H1 (cell line): ENCODE measurements at regions of chr1 and their contacts with region 1.

Region 1: GRCh38 chr1:67540733-67541125 is 110.5 kb upstream of the SERBP1 start:
- DNase-seq: no peak
- H3K4me3 ChIP-seq: no peak overlapping the region
- H3K27ac ChIP-seq: no peak overlapping the region
- H3K4me1 ChIP-seq: no peaks in the 10 kb centered on the region
- H3K27me3 ChIP-seq: no peaks in the 10 kb centered on the region
- CTCF ChIP-seq: no peak
- EP300 ChIP-seq: no peak
- POLR2A ChIP-seq: no peak
- RAD21 ChIP-seq: no peak

Region 2: DNA sequence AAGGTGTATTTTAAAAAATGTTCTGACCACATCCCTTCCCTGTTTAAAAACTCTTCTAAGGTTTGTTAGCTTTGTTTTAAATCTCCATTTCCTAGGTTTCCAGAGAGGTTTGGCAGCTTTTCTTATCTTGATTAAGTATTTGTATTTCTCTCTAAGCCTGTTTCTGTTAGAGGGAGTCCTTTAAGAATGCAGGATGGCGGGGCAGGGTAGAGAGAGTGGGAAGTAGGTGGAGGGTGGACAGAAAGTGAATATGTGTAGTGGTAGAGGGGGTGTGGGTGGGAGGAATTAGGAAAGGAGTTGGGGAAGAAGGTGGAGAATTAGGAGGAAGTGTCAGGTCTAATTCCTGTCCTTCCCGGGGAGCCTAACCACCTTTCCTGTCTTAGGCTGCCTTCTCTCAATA is 89.4 kb before region 1 on chr1:
- CTCF ChIA-PET with region 1: no interaction called
- POLR2A ChIA-PET with region 1: no interaction called
- DNase-seq: no peak
- H3K4me3 ChIP-seq: no peak overlapping the region
- H3K27ac ChIP-seq: no peak overlapping the region
- H3K4me1 ChIP-seq: peaks cover 0 to 2% (median under 1%) of the 10 kb centered on the region in 4 experiments; a peak in 2 of 7 replicates
- H3K27me3 ChIP-seq: no peaks in the 10 kb centered on the region
- CTCF ChIP-seq: no peak
- EP300 ChIP-seq: no peak
- POLR2A ChIP-seq: no peak
- RAD21 ChIP-seq: no peak

Region 3: DNA sequence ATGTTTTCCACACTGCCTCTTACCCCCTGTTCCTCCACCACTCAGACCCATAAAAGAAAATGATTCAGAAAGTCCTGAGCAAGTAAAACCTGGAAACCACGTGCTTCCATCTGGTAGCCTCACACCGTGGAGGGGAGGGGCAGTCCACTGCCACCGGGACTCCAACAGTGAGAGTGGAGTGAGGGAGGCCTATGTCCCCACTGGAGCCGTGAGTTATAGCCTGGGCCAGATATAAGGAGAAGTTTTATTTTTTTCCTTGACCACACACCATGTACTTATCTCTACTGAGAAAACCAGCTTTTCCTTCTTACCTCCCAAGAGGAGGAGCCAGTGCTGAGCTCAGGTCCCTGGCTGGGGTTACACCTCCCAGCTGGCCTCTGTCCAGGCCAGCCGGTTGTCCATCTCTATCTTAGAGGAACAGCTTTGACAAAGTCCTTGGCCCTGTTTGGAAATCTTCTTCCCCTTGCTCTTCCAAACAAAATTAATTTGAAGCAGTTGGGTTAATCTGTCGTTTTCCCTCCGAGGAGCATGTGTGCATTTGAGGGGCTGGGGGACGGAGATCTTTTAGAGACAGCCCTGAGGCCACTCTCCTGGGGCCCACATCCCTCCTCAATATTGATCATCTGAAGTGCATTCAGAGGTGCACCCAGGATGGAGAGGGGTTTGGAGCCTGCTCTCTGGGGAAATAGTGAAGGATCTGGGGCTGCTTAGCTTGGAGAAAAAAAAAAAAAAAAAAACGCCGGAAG is 61.4 kb before region 1 on chr1:
- CTCF ChIA-PET with region 1: no interaction called
- POLR2A ChIA-PET with region 1: no interaction called
- DNase-seq: no peak
- H3K4me3 ChIP-seq: no peak overlapping the region
- H3K27ac ChIP-seq: no peak overlapping the region
- H3K4me1 ChIP-seq: peaks cover 0 to 1% (median 0%) of the 10 kb centered on the region in 4 experiments; a peak in 1 of 7 replicates
- H3K27me3 ChIP-seq: no peaks in the 10 kb centered on the region
- CTCF ChIP-seq: no peak
- EP300 ChIP-seq: no peak
- POLR2A ChIP-seq: no peak
- RAD21 ChIP-seq: no peak

Region 4: GRCh38 chr1:67524143-67525052 is 16.3 kb before region 1 on chr1:
- CTCF ChIA-PET with region 1: interaction called, 83 read pairs
- POLR2A ChIA-PET with region 1: no interaction called
- DNase-seq: no peak
- H3K4me3 ChIP-seq: no peak overlapping the region
- H3K27ac ChIP-seq: no peak overlapping the region
- H3K4me1 ChIP-seq: no peaks in the 10 kb centered on the region
- H3K27me3 ChIP-seq: peaks cover 14 to 36% (median 22%) of the 10 kb centered on the region in 4 experiments
- CTCF ChIP-seq: peak in 2 of 3 experiments; percentile 5 to 48; a peak in 2 of 4 replicates
- EP300 ChIP-seq: no peak
- POLR2A ChIP-seq: no peak
- RAD21 ChIP-seq: peak in 1 of 2 experiments; percentile 32; a peak in 1 of 4 replicates

Region 5: GRCh38 chr1:67570473-67571143 is 29.9 kb after region 1 on chr1:
- CTCF ChIA-PET with region 1: interaction called, 11 read pairs
- POLR2A ChIA-PET with region 1: no interaction called
- DNase-seq: no peak
- H3K4me3 ChIP-seq: no peak overlapping the region
- H3K27ac ChIP-seq: no peak overlapping the region
- H3K4me1 ChIP-seq: no peaks in the 10 kb centered on the region
- H3K27me3 ChIP-seq: no peaks in the 10 kb centered on the region
- CTCF ChIP-seq: no peak
- EP300 ChIP-seq: no peak
- POLR2A ChIP-seq: no peak
- RAD21 ChIP-seq: no peak